Ascending aorta (tissue), 2 donors: ENCODE measurements at regions of chr5 and their contacts with region 1.

Region 1: DNA sequence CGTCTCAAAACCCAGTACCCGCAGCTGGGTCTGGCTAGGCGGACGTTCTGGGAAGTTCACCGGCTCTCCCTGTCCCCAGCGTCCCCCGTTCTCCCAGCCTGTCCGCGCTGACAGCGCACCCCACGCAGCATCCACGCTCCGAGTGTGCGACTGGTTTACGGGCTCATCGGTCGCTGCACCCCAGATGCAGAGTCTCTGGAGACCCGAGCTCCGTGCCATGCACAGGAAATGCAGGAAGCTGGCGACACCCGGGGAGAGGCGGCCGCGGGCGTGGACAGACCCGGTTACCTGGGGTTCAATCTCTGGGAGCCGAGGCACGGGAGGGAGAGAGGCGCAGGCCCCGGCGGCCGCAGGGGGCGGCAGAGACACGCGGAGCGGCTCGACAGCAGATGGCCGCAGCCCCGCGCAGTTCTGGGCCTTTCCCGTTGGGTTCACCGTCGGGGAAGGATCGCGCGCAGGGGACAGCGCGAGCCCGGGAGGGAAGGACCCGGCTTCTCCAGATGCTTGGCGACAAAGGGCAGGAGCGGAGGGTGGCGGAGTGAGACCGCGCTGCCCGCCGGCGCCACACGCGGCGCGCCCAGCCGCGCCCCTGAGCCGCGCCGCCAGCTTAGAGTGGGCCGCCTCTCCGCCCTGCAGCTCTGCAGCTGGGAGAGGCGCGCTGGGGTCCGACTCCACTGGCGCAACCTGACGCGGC is 558 bp downstream of the SHROOM1 start:
- DNase-seq: peak in 1 of 2 donors; percentile 85
- H3K4me3 ChIP-seq: peak overlapping the region; percentile 74 to 78
- H3K27ac ChIP-seq: peak overlapping the region; percentile 18 to 55
- H3K4me1 ChIP-seq: peaks cover 5 to 9% of the 10 kb centered on the region in 2 donors
- H3K27me3 ChIP-seq: no peaks in the 10 kb centered on the region
- CTCF ChIP-seq: peak; percentile 70 to 95 (median 92)

Region 2: DNA sequence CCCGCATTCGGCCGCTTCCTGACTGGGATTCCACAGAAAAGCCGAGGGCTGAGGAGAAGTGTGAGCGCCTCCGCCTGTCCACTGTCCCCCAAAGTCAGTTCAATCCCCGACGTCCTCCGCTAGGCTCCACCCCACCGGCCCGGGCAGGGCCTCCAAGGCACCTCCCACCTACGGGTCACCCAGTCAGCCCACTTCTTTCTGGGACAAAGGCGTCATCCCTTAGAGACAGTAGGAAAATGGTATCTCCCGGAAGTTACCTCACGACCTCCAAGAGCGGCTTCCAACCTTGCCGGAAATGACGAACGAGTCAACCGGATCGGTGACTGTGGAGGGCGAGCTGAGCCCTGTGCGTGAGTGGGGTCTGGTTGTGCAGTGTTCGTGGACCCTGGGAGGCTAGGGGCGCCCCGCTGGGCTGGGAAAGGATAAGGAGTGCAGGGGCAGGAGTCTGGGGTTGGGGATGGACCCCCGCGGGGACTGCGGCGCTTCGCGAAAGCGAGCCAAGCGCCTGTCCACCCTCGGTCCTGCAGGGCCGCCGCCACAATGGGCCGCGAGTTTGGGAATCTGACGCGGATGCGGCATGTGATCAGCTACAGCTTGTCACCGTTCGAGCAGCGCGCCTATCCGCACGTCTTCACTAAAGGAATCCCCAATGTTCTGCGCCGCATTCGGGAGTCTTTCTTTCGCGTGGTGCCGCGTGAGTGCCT is 36.6 kb after region 1 on chr5 and contains the starts of genes GDF9 and UQCRQ:
- intact Hi-C with region 1: loop called (anchors 1 kb)
- DNase-seq: peak; percentile 92 to 98
- H3K4me3 ChIP-seq: peak within 1 kb of the TSS; percentile 82 to 85
- H3K27ac ChIP-seq: peak within 1 kb of the TSS; percentile 90 to 95
- H3K4me1 ChIP-seq: peaks cover 5 to 14% of the 10 kb centered on the region in 2 donors
- H3K27me3 ChIP-seq: no peaks in the 10 kb centered on the region
- CTCF ChIP-seq: peak in 1 of 3 experiments; percentile 23
- total RNA-seq, gene GDF9: not detected
- total RNA-seq, gene UQCRQ: 53.6 TPM

Region 3: GRCh38 chr5:132883261-132883834 is 53.5 kb after region 1 on chr5:
- intact Hi-C with region 1: loop called (anchors 5 kb)
- DNase-seq: no peak
- H3K4me3 ChIP-seq: no peak overlapping the region
- H3K27ac ChIP-seq: no peak overlapping the region
- H3K4me1 ChIP-seq: no peaks in the 10 kb centered on the region
- H3K27me3 ChIP-seq: no peaks in the 10 kb centered on the region
- CTCF ChIP-seq: peak; percentile 37 to 54 (median 43)